Caco-2 (cell line): ENCODE measurements at regions of chr13 and their contacts with region 1.

Region 1: DNA sequence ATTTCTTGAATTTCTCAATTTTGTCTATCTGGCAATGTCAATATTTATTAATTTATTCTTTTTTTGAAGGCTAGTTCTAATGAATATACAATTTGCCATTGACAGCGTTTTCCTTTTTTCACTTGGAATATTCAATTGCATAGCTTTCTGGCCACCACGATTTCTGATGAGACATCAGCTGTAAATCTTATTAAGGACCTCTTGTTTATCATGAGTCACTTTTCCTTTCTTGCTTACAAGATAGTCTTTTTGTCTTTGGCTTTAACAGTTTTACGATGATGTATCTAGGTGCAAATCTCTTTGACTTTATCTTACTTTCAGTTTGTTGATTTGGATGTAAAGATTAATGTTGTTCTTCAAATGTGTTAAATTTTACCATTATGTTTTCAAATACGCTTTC is 991.6 kb upstream of the SLC10A2 start:
- DNase-seq: no peak
- H3K4me3 ChIP-seq: no peak overlapping the region
- H3K4me3 Mint-ChIP-seq: no peak overlapping the region
- H3K27ac Mint-ChIP-seq: no peak overlapping the region
- H3K4me1 ChIP-seq: no peaks in the 10 kb centered on the region
- H3K4me1 Mint-ChIP-seq: no peaks in the 10 kb centered on the region
- H3K27me3 ChIP-seq: no peaks in the 10 kb centered on the region
- H3K27me3 Mint-ChIP-seq: no peaks in the 10 kb centered on the region
- CTCF ChIP-seq: no peak

Region 2: DNA sequence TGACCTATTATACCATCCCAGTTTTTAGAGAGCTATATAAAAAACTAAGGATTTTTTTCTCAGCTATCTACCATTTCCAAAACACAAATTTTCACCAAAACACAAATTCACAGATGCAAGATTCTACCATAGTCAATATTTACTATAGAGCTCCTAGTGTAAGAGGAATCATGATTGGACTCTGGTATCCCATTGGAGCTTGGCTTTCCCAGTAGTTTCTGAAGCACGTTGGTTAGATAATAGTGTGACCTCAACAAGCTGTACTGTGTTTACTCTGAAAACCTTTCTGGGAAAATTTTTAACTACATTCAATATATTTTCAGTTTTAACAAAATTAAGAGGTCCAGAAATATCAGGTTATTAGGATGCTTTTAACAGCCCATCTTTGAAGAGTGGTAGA is 331.0 kb before region 1 on chr13:
- CTCF ChIA-PET with region 1: no interaction called
- POLR2A ChIA-PET with region 1: no interaction called
- intact Hi-C with region 1: no loop called
- DNase-seq: no peak
- H3K4me3 ChIP-seq: no peak overlapping the region
- H3K4me3 Mint-ChIP-seq: no peak overlapping the region
- H3K27ac Mint-ChIP-seq: no peak overlapping the region
- H3K4me1 ChIP-seq: no peaks in the 10 kb centered on the region
- H3K4me1 Mint-ChIP-seq: no peaks in the 10 kb centered on the region
- H3K27me3 ChIP-seq: no peaks in the 10 kb centered on the region
- H3K27me3 Mint-ChIP-seq: peaks cover 3% of the 10 kb centered on the region
- CTCF ChIP-seq: no peak

Region 3: GRCh38 chr13:104034891-104035290 is 23.0 kb before region 1 on chr13:
- CTCF ChIA-PET with region 1: no interaction called
- POLR2A ChIA-PET with region 1: no interaction called
- intact Hi-C with region 1: loop called (anchors 1 kb)
- DNase-seq: no peak
- H3K4me3 ChIP-seq: no peak overlapping the region
- H3K4me3 Mint-ChIP-seq: no peak overlapping the region
- H3K27ac Mint-ChIP-seq: no peak overlapping the region
- H3K4me1 ChIP-seq: no peaks in the 10 kb centered on the region
- H3K4me1 Mint-ChIP-seq: no peaks in the 10 kb centered on the region
- H3K27me3 ChIP-seq: no peaks in the 10 kb centered on the region
- H3K27me3 Mint-ChIP-seq: no peaks in the 10 kb centered on the region
- CTCF ChIP-seq: no peak